B cell (primary cell): ENCODE measurements at regions of chr11 and their contacts with region 1.

Region 1: DNA sequence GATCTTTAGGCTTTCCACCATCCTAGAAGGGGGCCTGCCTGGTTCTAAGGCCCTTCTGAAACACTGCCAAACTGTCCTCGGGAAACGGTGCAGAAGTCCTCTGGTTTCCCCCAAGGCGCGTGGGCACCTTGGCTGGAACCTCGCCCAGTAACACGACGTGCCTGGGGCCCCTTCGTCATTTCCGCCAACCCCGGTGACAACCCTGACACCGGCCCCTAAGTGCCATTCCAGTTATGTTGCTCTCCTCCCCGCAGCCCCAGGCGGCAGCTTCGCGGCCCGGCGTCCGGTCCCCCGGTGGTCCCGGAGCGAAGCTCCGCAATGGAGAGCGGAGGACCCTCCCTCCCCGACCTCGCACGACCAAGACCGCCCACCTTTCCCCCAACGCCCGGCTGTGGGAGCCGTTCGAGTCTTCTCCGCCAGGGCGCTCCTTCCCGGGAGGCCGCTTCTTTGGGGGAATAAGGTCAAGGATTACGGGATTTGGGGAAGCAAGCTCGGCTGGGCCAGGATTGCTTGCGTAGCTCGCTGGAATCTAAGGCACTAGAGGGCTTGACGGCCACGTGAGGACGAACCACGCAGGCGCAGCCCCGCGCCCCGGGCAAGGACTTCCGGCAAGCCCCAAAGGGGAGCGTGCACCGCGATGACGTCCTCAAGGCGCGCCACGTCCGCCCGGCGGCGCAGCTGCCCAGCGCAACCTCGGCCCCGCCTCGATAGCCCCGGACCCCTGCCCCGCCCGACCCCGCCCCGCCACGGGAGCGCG is 626 bp downstream of the RNH1 start:
- DNase-seq: peak; percentile 97
- ATAC-seq: peak; percentile 70
- H3K4me3 ChIP-seq: peak overlapping the region; percentile 38 to 100 (median 98)
- H3K4me3 Mint-ChIP-seq: peak overlapping the region; percentile 99
- H3K27ac ChIP-seq: peak overlapping the region; percentile 100
- H3K27ac Mint-ChIP-seq: peak overlapping the region; percentile 100
- H3K4me1 ChIP-seq: peaks cover 28 to 45% of the 10 kb centered on the region in 2 donors
- H3K4me1 Mint-ChIP-seq: peaks cover 38% of the 10 kb centered on the region
- H3K27me3 ChIP-seq: peaks cover 0 to 10% (median 0%) of the 10 kb centered on the region in 4 experiments
- H3K27me3 Mint-ChIP-seq: no peaks in the 10 kb centered on the region
- CTCF ChIP-seq: no peak

Region 2: GRCh38 chr11:236774-237767 is 269.3 kb before region 1 on chr11 and contains the start of gene PSMD13:
- CTCF ChIA-PET with region 1: interaction called, 3 read pairs
- POLR2A ChIA-PET with region 1: no interaction called
- intact Hi-C with region 1: loop called (anchors 1 kb)
- DNase-seq: peak; percentile 91
- ATAC-seq: peak; percentile 77
- H3K4me3 ChIP-seq: peak within 1 kb of the TSS; percentile 89 to 98 (median 95)
- H3K4me3 Mint-ChIP-seq: peak within 1 kb of the TSS; percentile 99
- H3K27ac ChIP-seq: peak within 1 kb of the TSS; percentile 94 to 99
- H3K27ac Mint-ChIP-seq: peak within 1 kb of the TSS; percentile 100
- H3K4me1 ChIP-seq: peaks cover 18 to 22% of the 10 kb centered on the region in 2 donors
- H3K4me1 Mint-ChIP-seq: peaks cover 38% of the 10 kb centered on the region
- H3K27me3 ChIP-seq: no peaks in the 10 kb centered on the region
- H3K27me3 Mint-ChIP-seq: no peaks in the 10 kb centered on the region
- CTCF ChIP-seq: no peak
- total RNA-seq, gene PSMD13: 96.2 and 104 TPM in 2 replicates

Region 3: GRCh38 chr11:560305-561147 is 54.1 kb after region 1 on chr11 and contains the starts of genes LMNTD2 and RASSF7:
- CTCF ChIA-PET with region 1: no interaction called
- POLR2A ChIA-PET with region 1: no interaction called
- intact Hi-C with region 1: loop called (anchors 2 kb)
- DNase-seq: peak; percentile 95
- ATAC-seq: peak; percentile 97
- H3K4me3 ChIP-seq: peak within 1 kb of the TSS; percentile 15 to 70 (median 66)
- H3K4me3 Mint-ChIP-seq: peak within 1 kb of the TSS; percentile 88
- H3K27ac ChIP-seq: peak within 1 kb of the TSS; percentile 75 to 89
- H3K27ac Mint-ChIP-seq: peak within 1 kb of the TSS; percentile 83
- H3K4me1 ChIP-seq: peaks cover 14 to 29% of the 10 kb centered on the region in 2 donors
- H3K4me1 Mint-ChIP-seq: peaks cover 16% of the 10 kb centered on the region
- H3K27me3 ChIP-seq: peaks cover 0 to 8% (median 2%) of the 10 kb centered on the region in 4 experiments
- H3K27me3 Mint-ChIP-seq: no peaks in the 10 kb centered on the region
- CTCF ChIP-seq: no peak
- total RNA-seq, gene LMNTD2: 19.7 and 21.4 TPM in 2 replicates
- total RNA-seq, gene RASSF7: 24.7 and 29.8 TPM in 2 replicates

Region 4: GRCh38 chr11:575996-576768 is 69.8 kb after region 1 on chr11 and contains the start of gene PHRF1:
- CTCF ChIA-PET with region 1: no interaction called
- POLR2A ChIA-PET with region 1: no interaction called
- intact Hi-C with region 1: loop called (anchors 1 kb)
- DNase-seq: peak; percentile 98
- ATAC-seq: peak; percentile 87
- H3K4me3 ChIP-seq: peak within 1 kb of the TSS; percentile 65 to 95 (median 86)
- H3K4me3 Mint-ChIP-seq: peak within 1 kb of the TSS; percentile 93
- H3K27ac ChIP-seq: peak within 1 kb of the TSS; percentile 97 to 98
- H3K27ac Mint-ChIP-seq: peak within 1 kb of the TSS; percentile 99
- H3K4me1 ChIP-seq: peaks cover 30 to 44% of the 10 kb centered on the region in 2 donors
- H3K4me1 Mint-ChIP-seq: peaks cover 44% of the 10 kb centered on the region
- H3K27me3 ChIP-seq: peaks cover 0 to 18% (median 8%) of the 10 kb centered on the region in 4 experiments
- H3K27me3 Mint-ChIP-seq: peaks cover 15% of the 10 kb centered on the region
- CTCF ChIP-seq: no peak
- total RNA-seq, gene PHRF1: 57.9 and 63.5 TPM in 2 replicates